ENCODE measurements at regions of chr9 and their contacts with region 1.

Region 1: GRCh38 chr9:134067904-134068743 is at the start of gene BRD3:
- DNase-seq: peak; percentile 85
- H3K4me3 Mint-ChIP-seq: peak within 1 kb of the TSS; percentile 87
- H3K27ac Mint-ChIP-seq: peak within 1 kb of the TSS; percentile 80
- H3K4me1 Mint-ChIP-seq: peaks cover 24% of the 10 kb centered on the region
- H3K27me3 Mint-ChIP-seq: peaks cover 13% of the 10 kb centered on the region
- total RNA-seq, gene BRD3: 29.2 to 30.0 TPM

Region 2: DNA sequence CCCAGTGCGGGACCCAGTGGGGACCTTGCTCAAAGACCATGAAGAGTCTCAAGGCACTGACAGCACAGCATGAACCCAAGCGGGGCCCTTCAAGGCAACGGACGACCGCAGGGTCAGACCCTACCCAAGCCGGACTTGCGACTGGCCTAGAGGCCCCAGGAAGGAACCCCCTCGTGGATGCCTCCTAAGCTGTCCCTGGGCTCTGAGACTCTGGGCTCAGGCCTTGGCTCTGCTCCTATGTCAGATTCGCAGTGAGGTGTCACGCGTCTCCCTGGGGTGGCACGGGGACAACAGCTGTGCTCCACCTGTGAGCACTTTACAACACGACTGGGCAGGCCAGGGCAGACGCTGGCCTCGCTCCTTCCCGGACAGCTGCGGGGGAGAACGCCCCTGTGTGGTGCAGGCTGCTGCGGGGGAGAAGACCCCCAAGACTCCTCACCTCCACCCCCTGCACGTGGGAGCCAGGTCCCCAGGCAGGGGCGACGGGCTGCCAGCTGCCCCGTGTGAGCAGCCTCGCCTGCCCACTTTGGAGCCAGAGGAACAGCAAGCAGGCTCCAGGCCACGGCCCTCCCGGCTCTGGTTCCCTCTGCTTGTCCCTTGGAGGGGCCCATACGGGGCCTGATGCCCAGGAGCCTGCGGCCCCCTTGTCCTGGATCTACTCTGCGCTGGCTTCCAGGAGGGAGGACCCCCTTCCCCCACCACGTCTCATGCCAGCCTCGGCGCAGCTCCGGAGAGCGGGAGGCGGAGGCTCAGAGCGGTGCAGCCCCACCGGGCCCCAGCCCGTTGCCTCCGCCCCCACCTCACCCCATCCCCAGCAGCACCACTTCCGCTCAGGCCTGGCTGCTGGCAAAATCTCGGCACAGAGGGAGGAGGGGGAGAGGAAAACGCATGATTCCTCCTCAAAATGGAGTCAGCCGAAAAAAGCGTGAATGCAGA is 366.0 kb before region 1 on chr9:
- CTCF ChIA-PET with region 1: no interaction called
- POLR2A ChIA-PET with region 1: no interaction called
- intact Hi-C with region 1: loop called (anchors 5 kb)
- DNase-seq: peak; percentile 85
- H3K4me3 Mint-ChIP-seq: peak overlapping the region; percentile 86
- H3K27ac Mint-ChIP-seq: peak overlapping the region; percentile 93
- H3K4me1 Mint-ChIP-seq: peaks cover 45% of the 10 kb centered on the region
- H3K27me3 Mint-ChIP-seq: no peaks in the 10 kb centered on the region

Region 3: GRCh38 chr9:134024828-134025605 is 43.1 kb before region 1 on chr9 and contains the start of gene BRD3OS:
- CTCF ChIA-PET with region 1: interaction called, 6 read pairs
- POLR2A ChIA-PET with region 1: interaction called, 13 read pairs
- intact Hi-C with region 1: loop called (anchors 1 kb)
- DNase-seq: peak; percentile 94
- H3K4me3 Mint-ChIP-seq: peak within 1 kb of the TSS; percentile 76
- H3K27ac Mint-ChIP-seq: peak within 1 kb of the TSS; percentile 33
- H3K4me1 Mint-ChIP-seq: peaks cover 12% of the 10 kb centered on the region
- H3K27me3 Mint-ChIP-seq: no peaks in the 10 kb centered on the region
- total RNA-seq, gene BRD3OS: 12.6 to 13.2 TPM

Region 4: DNA sequence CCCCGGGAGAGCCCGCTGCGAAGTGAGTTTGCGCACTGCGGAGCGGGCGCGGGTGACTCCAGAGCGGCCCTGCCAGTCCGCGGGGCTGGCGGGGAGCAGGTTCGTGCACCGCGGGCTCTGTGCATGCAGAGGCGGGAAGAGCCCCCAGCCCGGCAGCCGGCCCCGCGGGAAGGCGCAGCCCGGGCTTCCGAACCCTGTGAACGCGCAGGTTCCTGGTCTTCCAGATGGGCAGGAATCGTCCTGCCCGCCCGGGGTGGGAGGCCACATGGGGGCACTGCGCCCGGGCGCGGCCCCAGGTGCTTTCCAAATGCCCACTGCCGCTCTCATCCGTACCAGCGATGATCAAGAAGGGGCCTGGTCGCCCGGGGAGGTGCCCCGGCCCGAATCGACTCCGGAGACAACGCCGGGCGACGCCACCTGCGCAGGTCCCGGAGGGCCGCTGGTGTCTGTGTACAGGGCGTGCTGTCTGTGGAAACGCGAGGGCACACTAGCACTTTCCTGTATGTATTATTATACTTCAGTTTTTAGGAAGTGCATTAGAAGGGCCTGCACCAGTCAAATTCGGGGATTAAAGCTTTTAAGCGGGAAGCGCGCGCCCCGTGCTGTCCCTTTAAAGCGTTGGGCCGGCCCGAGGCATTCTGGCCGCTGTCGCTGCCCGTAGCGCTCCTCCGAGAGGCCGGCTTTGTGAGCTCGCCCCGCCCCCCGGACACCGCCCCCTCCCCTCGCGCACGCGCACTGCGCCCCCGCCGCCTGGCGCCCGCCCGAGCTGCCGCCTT is 67.4 kb after region 1 on chr9 and contains the start of gene WDR5:
- CTCF ChIA-PET with region 1: interaction called, 3 read pairs
- POLR2A ChIA-PET with region 1: interaction called, 8 read pairs
- intact Hi-C with region 1: loop called (anchors 1 kb)
- DNase-seq: peak; percentile 93
- H3K4me3 Mint-ChIP-seq: peak within 1 kb of the TSS; percentile 96
- H3K27ac Mint-ChIP-seq: peak within 1 kb of the TSS; percentile 92
- H3K4me1 Mint-ChIP-seq: peaks cover 32% of the 10 kb centered on the region
- H3K27me3 Mint-ChIP-seq: no peaks in the 10 kb centered on the region
- total RNA-seq, gene WDR5: 41.6 to 43.0 TPM

Region 5: DNA sequence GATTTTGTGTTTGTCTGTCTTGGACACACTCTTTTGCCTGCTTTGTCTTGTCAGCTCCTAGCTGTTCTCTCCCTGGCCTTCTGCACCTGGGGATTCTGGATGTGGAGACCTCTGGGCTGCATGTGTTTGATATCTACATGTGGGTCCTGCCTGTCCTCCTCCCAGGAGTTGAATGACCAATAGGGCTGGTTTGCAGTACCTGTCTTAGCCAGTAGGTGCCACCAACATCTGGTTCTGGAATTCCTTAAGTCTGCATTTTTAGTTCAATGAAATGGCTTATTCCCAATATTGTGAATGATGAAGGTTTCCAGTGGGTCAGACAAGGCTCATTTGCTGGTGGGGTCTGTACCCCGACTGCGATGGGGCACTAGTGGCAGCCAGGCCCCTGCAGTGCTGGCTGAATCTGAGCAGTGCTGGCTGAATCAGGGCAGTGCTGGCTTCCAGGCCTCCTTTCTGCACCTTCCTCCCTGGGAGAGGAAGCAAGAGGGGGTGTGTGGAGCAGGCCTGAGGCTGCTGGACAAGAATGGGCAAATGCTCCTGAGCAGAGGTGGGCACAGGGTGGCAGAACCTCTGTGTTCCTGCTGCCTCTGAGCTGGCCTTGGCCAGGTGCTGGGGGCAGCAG is 331.4 kb after region 1 on chr9:
- CTCF ChIA-PET with region 1: no interaction called
- POLR2A ChIA-PET with region 1: no interaction called
- intact Hi-C with region 1: loop called (anchors 10 kb)
- DNase-seq: peak; percentile 37
- H3K4me3 Mint-ChIP-seq: no peak overlapping the region
- H3K27ac Mint-ChIP-seq: no peak overlapping the region
- H3K4me1 Mint-ChIP-seq: peaks cover 41% of the 10 kb centered on the region
- H3K27me3 Mint-ChIP-seq: no peaks in the 10 kb centered on the region

Measured in activated CD4-positive, alpha-beta memory T cell treated with anti-CD3 and anti-CD28 coated beads for 36 hours (primary cell).